ENCODE measurements at regions of chr7 and their contacts with region 1.

Region 1: GRCh38 chr7:37916673-37917660 is at the start of gene SFRP4:
- DNase-seq: peak; percentile 69 to 84
- H3K4me3 ChIP-seq: peak within 1 kb of the TSS; percentile 66 to 86
- H3K27ac ChIP-seq: peak within 1 kb of the TSS; percentile 80 to 89
- H3K4me1 ChIP-seq: peaks cover 0 to 30% (median 22%) of the 10 kb centered on the region in 4 donors
- H3K27me3 ChIP-seq: no peaks in the 10 kb centered on the region
- CTCF ChIP-seq: peak; percentile 70 to 78

Region 2: DNA sequence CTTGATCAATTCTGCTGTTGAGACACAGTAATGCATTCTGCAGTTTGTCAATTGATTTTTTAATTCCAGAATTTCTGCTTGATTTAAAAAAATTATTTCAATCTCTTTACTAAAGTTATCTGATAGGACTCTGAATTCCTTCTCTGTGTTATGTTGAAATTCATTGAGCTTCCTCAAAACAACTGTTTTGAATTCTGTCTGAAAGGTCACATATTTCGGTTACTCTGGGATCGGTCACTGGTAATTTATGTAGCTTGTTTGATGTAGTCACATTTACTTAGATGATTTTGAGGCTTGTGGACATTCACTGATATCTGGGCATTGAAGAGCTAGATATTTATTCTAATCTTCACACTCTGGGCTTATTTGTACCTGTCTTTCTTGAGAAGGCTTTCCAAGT is 135.8 kb before region 1 on chr7:
- intact Hi-C with region 1: no loop called
- DNase-seq: no peak
- H3K4me3 ChIP-seq: no peak overlapping the region
- H3K27ac ChIP-seq: no peak overlapping the region
- H3K4me1 ChIP-seq: peaks cover 0 to 7% (median 0%) of the 10 kb centered on the region in 4 donors
- H3K27me3 ChIP-seq: no peaks in the 10 kb centered on the region
- CTCF ChIP-seq: no peak

Region 3: DNA sequence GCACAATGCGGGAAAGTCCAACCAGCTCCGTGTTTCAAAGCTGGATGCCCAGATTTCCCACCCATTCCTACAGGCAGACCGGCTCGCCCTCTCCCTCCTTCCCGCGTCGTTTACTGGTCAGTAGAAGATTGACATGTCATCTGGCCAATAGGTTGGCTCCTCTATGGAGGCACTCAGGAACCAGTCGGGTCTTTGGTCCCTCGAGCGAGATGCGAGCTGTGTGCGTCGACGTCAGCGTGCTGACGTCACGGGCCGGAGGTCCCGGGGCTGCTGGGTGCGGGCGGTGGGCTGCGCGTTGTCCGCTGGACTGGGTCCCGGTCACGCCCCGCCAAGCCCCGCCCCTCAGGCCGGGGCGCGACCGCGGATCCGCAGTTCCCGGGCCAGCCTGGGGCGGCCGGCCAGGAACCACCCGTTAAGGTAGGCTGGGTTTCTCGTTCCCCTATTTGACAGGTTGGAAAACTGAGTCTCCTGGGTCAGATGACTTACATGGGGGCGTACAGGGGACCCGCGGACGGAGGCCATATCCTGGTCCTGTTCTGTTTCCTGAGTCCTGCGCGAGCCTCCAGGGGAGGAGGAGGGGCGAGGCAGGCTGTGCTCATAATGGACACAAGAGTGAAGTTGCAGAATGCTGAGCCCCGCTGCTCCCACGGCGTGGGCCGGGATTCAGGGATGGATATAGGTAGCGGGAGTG is 261.2 kb after region 1 on chr7 and contains the start of gene STARD3NL:
- intact Hi-C with region 1: loop called (anchors 2 kb)
- DNase-seq: peak; percentile 98 to 99
- H3K4me3 ChIP-seq: peak within 1 kb of the TSS; percentile 68 to 89
- H3K27ac ChIP-seq: peak within 1 kb of the TSS; percentile 87 to 93
- H3K4me1 ChIP-seq: peaks cover 0 to 20% (median 7%) of the 10 kb centered on the region in 4 donors
- H3K27me3 ChIP-seq: no peaks in the 10 kb centered on the region
- CTCF ChIP-seq: peak in 1 of 2 experiments; percentile 18